ENCODE measurements at regions of chr3 and their contacts with region 1.

Region 1: GRCh38 chr3:8963137-8963869 is at the start of gene RAD18:
- DNase-seq: peak; percentile 93 to 96
- ATAC-seq: peak; percentile 96 to 99 (median 98)
- H3K4me3 ChIP-seq: peak within 1 kb of the TSS; percentile 89
- H3K4me3 Mint-ChIP-seq: peak within 1 kb of the TSS; percentile 98
- H3K27ac ChIP-seq: peak within 1 kb of the TSS; percentile 88
- H3K27ac Mint-ChIP-seq: peak within 1 kb of the TSS; percentile 99
- H3K4me1 ChIP-seq: peaks cover 11% of the 10 kb centered on the region
- H3K4me1 Mint-ChIP-seq: peaks cover 24 to 31% of the 10 kb centered on the region in 2 donors
- H3K27me3 ChIP-seq: no peaks in the 10 kb centered on the region
- H3K27me3 Mint-ChIP-seq: peaks cover 5 to 10% of the 10 kb centered on the region in 2 donors
- CTCF ChIP-seq: no peak
- total RNA-seq, gene RAD18: 19.8 to 23.3 (median 22.5) TPM

Region 2: GRCh38 chr3:8793242-8793641 is 170.1 kb before region 1 on chr3:
- intact Hi-C with region 1: no loop called
- DNase-seq: no peak
- ATAC-seq: no peak
- H3K4me3 ChIP-seq: no peak overlapping the region
- H3K4me3 Mint-ChIP-seq: no peak overlapping the region
- H3K27ac ChIP-seq: no peak overlapping the region
- H3K27ac Mint-ChIP-seq: no peak overlapping the region
- H3K4me1 ChIP-seq: no peaks in the 10 kb centered on the region
- H3K4me1 Mint-ChIP-seq: no peaks in the 10 kb centered on the region
- H3K27me3 ChIP-seq: peaks cover 2% of the 10 kb centered on the region
- H3K27me3 Mint-ChIP-seq: no peaks in the 10 kb centered on the region
- CTCF ChIP-seq: no peak

Region 3: GRCh38 chr3:9249273-9250192 is 286.2 kb after region 1 on chr3 and contains the start of gene SRGAP3:
- intact Hi-C with region 1: loop called (anchors 2 kb)
- DNase-seq: peak; percentile 69 to 88
- ATAC-seq: peak; percentile 98 to 99 (median 99)
- H3K4me3 ChIP-seq: peak within 1 kb of the TSS; percentile 48
- H3K4me3 Mint-ChIP-seq: peak within 1 kb of the TSS; percentile 93
- H3K27ac ChIP-seq: no peak within 1 kb of the TSS
- H3K27ac Mint-ChIP-seq: peak within 1 kb of the TSS; percentile 47 to 67
- H3K4me1 ChIP-seq: peaks cover 19% of the 10 kb centered on the region
- H3K4me1 Mint-ChIP-seq: peaks cover 22 to 26% of the 10 kb centered on the region in 2 donors
- H3K27me3 ChIP-seq: no peaks in the 10 kb centered on the region
- H3K27me3 Mint-ChIP-seq: peaks cover 3 to 28% of the 10 kb centered on the region in 2 donors
- CTCF ChIP-seq: peak; percentile 31
- total RNA-seq, gene SRGAP3: 2.5 to 14.9 (median 3.0) TPM

Region 4: DNA sequence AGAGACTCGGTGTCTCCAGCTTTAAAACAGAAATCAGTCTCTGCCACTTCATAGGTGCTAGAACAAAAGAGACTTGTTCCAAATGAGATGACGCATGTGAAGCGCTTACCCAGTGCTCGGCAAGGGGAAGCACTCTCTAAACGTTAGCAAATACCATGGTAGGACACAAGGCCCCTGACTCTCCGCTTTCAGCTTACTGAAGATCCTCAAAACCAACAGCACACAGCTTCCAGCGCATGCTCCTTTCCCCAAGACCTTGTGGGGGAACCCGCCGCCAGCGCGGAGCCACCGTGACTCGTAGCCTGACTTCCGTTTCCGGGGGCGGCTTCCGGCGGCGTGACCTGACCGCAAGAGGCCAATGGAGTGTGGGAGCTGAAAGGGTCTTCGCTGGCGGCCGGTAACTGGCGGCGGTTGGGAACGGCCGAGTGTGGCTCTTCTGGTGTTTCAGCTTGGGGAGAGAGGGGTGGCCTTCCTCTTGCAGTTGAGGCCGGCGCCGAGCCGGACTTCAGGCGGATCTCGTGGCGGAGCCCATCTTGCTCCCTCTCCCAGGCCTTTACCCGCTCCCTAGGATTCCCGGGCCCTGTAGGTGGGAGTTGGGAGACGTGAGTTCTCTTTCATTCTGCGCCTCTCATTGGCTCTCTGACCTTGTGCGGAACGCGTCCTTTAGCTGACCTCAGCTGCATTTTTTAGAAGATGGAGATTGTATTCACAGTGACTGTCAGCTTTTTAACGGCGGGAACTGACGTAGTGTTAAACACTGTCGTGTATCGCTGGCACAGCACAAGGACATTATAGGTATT is 399.6 kb after region 1 on chr3 and contains the start of gene THUMPD3:
- intact Hi-C with region 1: loop called (anchors 1 kb)
- DNase-seq: peak; percentile 89 to 94
- ATAC-seq: peak; percentile 92 to 96 (median 96)
- H3K4me3 ChIP-seq: peak within 1 kb of the TSS; percentile 77
- H3K4me3 Mint-ChIP-seq: peak within 1 kb of the TSS; percentile 97
- H3K27ac ChIP-seq: peak within 1 kb of the TSS; percentile 92
- H3K27ac Mint-ChIP-seq: peak within 1 kb of the TSS; percentile 98 to 99
- H3K4me1 ChIP-seq: peaks cover 11% of the 10 kb centered on the region
- H3K4me1 Mint-ChIP-seq: peaks cover 9 to 10% of the 10 kb centered on the region in 2 donors
- H3K27me3 ChIP-seq: no peaks in the 10 kb centered on the region
- H3K27me3 Mint-ChIP-seq: peaks cover 0 to 8% of the 10 kb centered on the region in 2 donors
- CTCF ChIP-seq: no peak
- total RNA-seq, gene THUMPD3: 44.0 to 48.8 (median 46.3) TPM